Left ventricle myocardium inferior (tissue), 1 donor: ENCODE measurements at regions of chr1 and their contacts with region 1.

Region 1: DNA sequence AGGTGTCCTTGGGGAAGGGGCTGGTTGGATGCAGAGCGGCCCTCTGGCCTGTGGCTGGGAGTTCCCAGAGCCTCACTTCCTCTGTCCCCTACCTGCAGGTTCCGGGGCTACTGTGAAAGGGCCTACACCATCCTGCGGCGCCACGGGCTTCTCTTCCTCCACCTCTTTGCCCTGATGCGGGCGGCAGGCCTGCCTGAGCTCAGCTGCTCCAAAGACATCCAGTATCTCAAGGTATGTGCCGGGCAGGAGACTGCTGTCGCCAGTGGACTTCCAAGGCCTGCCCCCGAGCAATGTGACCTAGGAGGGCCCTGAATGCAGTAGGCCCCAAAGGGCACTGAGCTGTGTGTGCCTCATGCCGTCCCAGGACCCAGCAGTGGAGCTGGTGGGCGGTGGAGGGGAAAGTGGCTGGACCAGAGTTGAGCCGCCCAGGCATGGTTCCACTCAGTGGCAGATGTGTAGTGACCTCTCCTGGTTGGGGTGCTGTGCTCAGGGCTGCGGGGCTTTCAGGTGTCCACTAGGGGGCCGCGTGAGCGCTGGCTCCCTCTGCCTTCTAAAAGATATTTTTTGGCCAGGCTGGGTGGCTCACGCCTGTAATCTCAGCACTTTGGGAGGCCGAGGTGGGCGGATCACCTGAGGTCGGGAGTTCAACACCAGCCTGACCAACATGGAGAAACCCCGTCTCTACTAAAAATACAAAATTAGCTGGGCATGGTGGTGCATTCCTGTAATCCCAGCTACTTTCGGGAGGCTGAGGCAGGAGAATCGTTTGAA is 73.4 kb downstream of the PIK3CD start:
- DNase-seq: peak; percentile 50
- H3K4me3 ChIP-seq: no peak overlapping the region
- H3K27ac ChIP-seq: no peak overlapping the region
- H3K4me1 ChIP-seq: no peaks in the 10 kb centered on the region
- H3K27me3 ChIP-seq: no peaks in the 10 kb centered on the region
- CTCF ChIP-seq: peak; percentile 78

Region 2: DNA sequence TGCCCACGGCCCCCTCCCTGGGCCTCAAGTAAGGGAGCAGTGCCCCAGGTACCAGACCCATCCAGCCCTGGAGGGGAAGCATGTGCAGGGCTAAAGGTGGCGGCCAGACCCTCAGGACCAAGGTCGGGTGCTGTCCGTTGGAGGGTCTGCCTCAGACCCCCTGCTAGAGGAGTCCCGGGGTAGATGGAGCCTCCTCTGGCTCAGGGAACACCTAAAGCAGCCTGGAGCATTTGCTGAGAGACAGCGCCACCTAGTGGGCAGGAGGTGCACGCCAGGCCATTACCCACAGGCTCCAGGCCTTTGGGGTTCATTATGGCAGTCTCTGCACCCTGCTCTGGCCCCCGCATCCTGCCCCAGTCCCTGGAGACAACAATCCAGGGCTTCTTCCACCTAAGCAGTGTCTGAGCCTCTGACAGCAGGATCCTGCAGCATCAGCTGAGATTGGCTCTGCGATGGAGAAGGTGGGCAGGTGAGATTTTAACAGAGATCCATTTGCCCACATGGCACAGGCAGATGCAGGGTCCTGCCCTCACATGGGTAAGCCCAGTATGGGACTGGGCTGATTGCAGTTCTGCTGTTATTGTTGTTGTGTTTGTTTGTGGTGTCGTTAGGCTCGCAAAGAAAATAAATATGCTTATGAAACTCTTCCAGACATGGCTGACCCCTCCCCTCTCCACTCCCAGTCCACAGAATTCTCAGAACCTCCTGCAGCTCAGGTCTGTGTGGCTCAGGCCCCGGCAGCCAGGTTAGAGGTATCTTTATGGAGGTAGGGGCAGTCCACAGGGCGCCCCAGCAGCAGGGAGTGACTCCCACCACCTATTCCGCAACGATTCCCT is 142.7 kb after region 1 on chr1:
- intact Hi-C with region 1: loop called (anchors 10 kb)
- DNase-seq: peak; percentile 76
- H3K4me3 ChIP-seq: no peak overlapping the region
- H3K27ac ChIP-seq: no peak overlapping the region
- H3K4me1 ChIP-seq: peaks cover 25% of the 10 kb centered on the region
- H3K27me3 ChIP-seq: no peaks in the 10 kb centered on the region
- CTCF ChIP-seq: peak; percentile 98